Heart left ventricle (tissue), 16 donors: ENCODE measurements at regions of chr1 and their contacts with region 1.

Region 1: GRCh38 chr1:232630047-232630893 is at the start of gene SIPA1L2:
- DNase-seq: peak; percentile 96 to 98 (median 96)
- ATAC-seq: peak; percentile 92 to 98 (median 96)
- H3K4me3 ChIP-seq: peak within 1 kb of the TSS; percentile 68 to 96 (median 90)
- H3K27ac ChIP-seq: peak within 1 kb of the TSS; percentile 78 to 98 (median 94)
- H3K4me1 ChIP-seq: peaks cover 0 to 50% (median 25%) of the 10 kb centered on the region in 12 donors
- H3K27me3 ChIP-seq: no peaks in the 10 kb centered on the region
- CTCF ChIP-seq: peak in 10 of 12 donors; percentile 30 to 65 (median 52)
- POLR2A ChIP-seq: peak in 1 of 2 donors; percentile 94
- total RNA-seq, gene SIPA1L2: 70.8 to 148 (median 102) TPM

Region 2: DNA sequence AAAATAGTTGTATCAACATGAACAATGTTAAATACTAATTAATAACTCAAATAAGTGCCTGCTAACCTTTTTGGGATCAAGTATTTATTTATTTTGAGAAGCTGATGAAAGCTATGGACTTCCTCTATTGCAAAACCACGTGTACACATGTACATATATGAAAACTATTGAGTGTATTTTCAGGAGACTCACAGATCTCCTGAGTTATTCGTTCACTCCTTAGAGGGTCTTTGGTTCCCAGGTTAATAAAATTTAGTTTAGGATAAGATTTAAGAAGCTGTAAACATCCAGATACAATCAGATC is 873.2 kb before region 1 on chr1:
- intact Hi-C with region 1: loop called in 4 of 10 experiments (anchors 5 to 10 kb)
- DNase-seq: no peak
- ATAC-seq: peak in 2 of 4 donors; percentile 18 to 34
- H3K4me3 ChIP-seq: no peak overlapping the region
- H3K27ac ChIP-seq: no peak overlapping the region
- H3K4me1 ChIP-seq: peaks cover 0 to 8% (median 0%) of the 10 kb centered on the region in 12 donors
- H3K27me3 ChIP-seq: no peaks in the 10 kb centered on the region
- CTCF ChIP-seq: peak in 1 of 12 donors; percentile 11
- POLR2A ChIP-seq: no peak

Region 3: DNA sequence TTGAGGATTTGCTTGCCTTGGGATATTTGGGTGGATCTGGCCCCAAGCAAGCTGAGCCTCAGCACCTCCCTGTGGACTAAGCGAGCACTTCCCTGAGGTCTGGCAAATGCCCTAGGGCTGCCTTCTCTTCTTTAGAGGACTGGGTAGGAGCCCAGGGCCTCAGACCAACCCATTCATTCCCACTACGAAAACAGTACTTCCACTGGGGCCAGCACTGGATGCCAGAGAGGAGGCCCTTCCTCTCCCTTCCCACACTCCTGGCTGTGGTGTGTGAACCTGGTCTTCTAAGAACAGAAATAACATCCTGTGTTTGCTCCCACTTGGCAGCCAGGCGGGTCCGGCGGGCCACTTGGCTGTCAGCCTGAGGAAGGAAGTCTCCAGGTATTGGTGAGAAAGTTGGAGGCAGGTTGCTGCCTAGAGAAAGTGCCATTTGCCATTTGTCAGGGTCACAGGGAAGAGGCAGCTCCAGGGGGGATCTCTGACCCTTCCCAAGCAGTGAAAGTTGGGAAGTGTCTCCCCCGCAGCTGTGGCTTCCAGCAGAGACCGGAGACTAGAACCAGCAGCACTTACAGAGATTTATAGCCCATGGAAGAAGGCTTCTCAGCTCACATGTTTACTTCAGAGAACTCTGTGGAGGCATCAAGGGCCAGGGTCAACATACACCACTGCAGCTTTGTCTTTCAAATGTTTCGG is 323.9 kb before region 1 on chr1:
- intact Hi-C with region 1: loop called in 5 of 10 experiments (anchors 5 to 10 kb)
- DNase-seq: peak; percentile 46 to 71 (median 67)
- ATAC-seq: peak; percentile 67 to 96 (median 82)
- H3K4me3 ChIP-seq: no peak overlapping the region
- H3K27ac ChIP-seq: peak overlapping the region in 9 of 12 donors; percentile 2 to 71 (median 44)
- H3K4me1 ChIP-seq: peaks cover 0 to 27% (median 14%) of the 10 kb centered on the region in 12 donors
- H3K27me3 ChIP-seq: no peaks in the 10 kb centered on the region
- CTCF ChIP-seq: peak; percentile 10 to 66 (median 46)
- POLR2A ChIP-seq: no peak

Region 4: GRCh38 chr1:232435729-232436128 is 194.5 kb before region 1 on chr1:
- intact Hi-C with region 1: loop called in 4 of 10 experiments (anchors 5 to 10 kb)
- DNase-seq: peak in 2 of 5 donors; percentile 54
- ATAC-seq: peak; percentile 15 to 47 (median 27)
- H3K4me3 ChIP-seq: no peak overlapping the region
- H3K27ac ChIP-seq: peak overlapping the region in 5 of 12 donors; percentile 1 to 18 (median 7)
- H3K4me1 ChIP-seq: peaks cover 3 to 46% (median 17%) of the 10 kb centered on the region in 12 donors
- H3K27me3 ChIP-seq: no peaks in the 10 kb centered on the region
- CTCF ChIP-seq: no peak
- POLR2A ChIP-seq: no peak

Region 5: DNA sequence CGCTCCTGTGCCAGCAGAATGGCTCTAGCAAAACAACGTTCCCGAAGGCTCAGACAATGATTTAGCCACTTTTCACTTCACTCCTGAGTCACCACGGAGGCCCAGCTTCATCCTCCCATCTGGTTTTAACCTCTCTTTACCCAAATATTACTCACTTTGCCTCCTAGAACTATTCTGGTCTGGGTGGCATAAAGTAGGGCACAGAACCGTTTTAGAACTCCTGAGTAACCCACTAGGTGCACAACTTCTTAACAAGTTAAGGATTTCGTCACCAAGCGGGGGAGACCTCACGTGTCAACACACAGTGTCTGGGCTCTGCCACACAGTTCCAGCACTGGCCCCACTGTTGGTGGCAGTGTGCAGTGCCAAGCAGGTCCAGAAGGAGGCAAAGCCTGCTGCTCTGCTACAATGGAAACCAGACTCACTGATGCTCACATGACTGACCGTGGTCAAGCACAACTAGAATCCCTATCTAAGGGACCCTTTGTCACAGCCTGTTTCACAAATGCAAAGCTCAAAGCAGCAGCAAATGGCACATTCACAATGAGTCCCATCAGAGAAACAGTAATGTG is 122.1 kb before region 1 on chr1:
- intact Hi-C with region 1: loop called in 6 of 10 experiments (anchors 5 to 10 kb)
- DNase-seq: peak in 1 of 5 donors; percentile 33
- ATAC-seq: peak in 3 of 4 donors; percentile 40 to 67 (median 65)
- H3K4me3 ChIP-seq: no peak overlapping the region
- H3K27ac ChIP-seq: peak overlapping the region in 1 of 12 donors; percentile 46
- H3K4me1 ChIP-seq: peaks cover 0 to 57% (median 30%) of the 10 kb centered on the region in 12 donors
- H3K27me3 ChIP-seq: no peaks in the 10 kb centered on the region
- CTCF ChIP-seq: peak in 6 of 12 donors; percentile 13 to 38 (median 30)
- POLR2A ChIP-seq: no peak

Region 6: DNA sequence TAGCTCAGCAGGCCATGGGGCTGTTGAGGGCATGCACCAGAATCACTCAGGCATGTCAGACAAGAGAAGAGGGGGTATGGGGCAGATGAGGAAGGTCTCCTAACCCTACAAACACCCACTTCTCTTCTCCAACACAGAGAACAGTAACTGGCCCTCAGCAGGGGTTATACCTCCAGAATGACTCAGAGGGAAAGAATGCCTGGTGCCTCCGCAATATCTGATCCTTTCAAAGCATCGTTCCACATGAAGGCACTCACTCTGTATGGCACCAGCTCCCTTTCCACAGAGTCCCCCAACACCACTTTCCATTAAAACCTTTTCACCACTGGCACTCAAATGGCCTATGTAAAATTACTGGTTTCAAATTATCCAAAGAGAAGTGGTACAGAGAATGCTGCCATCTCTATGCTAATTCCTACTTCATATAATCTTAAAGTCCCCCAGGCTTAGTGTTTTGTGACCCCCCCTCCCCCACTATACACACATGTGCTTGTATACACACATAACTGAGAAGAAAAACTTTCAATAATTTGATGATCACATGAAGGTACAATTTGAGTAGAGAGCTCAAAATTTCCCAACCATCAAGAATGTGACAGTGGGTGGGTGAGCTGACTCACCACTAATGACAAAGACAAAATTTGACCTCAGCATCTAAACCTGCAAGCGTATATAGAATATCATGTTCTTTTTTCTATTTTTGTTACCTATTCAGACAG is 91.9 kb before region 1 on chr1:
- intact Hi-C with region 1: no loop called
- DNase-seq: no peak
- ATAC-seq: peak in 3 of 4 donors; percentile 35 to 54 (median 37)
- H3K4me3 ChIP-seq: no peak overlapping the region
- H3K27ac ChIP-seq: no peak overlapping the region
- H3K4me1 ChIP-seq: peaks cover 0 to 61% (median 25%) of the 10 kb centered on the region in 12 donors
- H3K27me3 ChIP-seq: no peaks in the 10 kb centered on the region
- CTCF ChIP-seq: no peak
- POLR2A ChIP-seq: no peak

Region 7: GRCh38 chr1:232578651-232579195 is 51.5 kb before region 1 on chr1:
- intact Hi-C with region 1: loop called in 3 of 10 experiments (anchors 5 to 10 kb)
- DNase-seq: no peak
- ATAC-seq: peak in 3 of 4 donors; percentile 36 to 85 (median 40)
- H3K4me3 ChIP-seq: no peak overlapping the region
- H3K27ac ChIP-seq: peak overlapping the region; percentile 15 to 78 (median 54)
- H3K4me1 ChIP-seq: peaks cover 0 to 77% (median 39%) of the 10 kb centered on the region in 12 donors
- H3K27me3 ChIP-seq: no peaks in the 10 kb centered on the region
- CTCF ChIP-seq: no peak
- POLR2A ChIP-seq: no peak

Region 8: GRCh38 chr1:232599178-232600041 is 30.9 kb before region 1 on chr1:
- intact Hi-C with region 1: no loop called
- DNase-seq: no peak
- ATAC-seq: peak in 3 of 4 donors; percentile 14 to 27 (median 19)
- H3K4me3 ChIP-seq: no peak overlapping the region
- H3K27ac ChIP-seq: peak overlapping the region in 7 of 12 donors; percentile 10 to 42 (median 27)
- H3K4me1 ChIP-seq: peaks cover 0 to 62% (median 45%) of the 10 kb centered on the region in 12 donors
- H3K27me3 ChIP-seq: no peaks in the 10 kb centered on the region
- CTCF ChIP-seq: no peak
- POLR2A ChIP-seq: no peak

Region 9: GRCh38 chr1:232655028-232655747 is 24.9 kb after region 1 on chr1:
- intact Hi-C with region 1: no loop called
- DNase-seq: no peak
- ATAC-seq: no peak
- H3K4me3 ChIP-seq: no peak overlapping the region
- H3K27ac ChIP-seq: no peak overlapping the region
- H3K4me1 ChIP-seq: peaks cover 0 to 6% (median 0%) of the 10 kb centered on the region in 12 donors
- H3K27me3 ChIP-seq: peaks cover 0 to 4% (median 0%) of the 10 kb centered on the region in 9 donors
- CTCF ChIP-seq: no peak
- POLR2A ChIP-seq: no peak

Region 10: GRCh38 chr1:233172227-233172626 is 542.0 kb after region 1 on chr1:
- intact Hi-C with region 1: loop called in 8 of 10 experiments (anchors 2 to 5 kb)
- DNase-seq: no peak
- ATAC-seq: peak in 3 of 4 donors; percentile 45 to 60 (median 56)
- H3K4me3 ChIP-seq: no peak overlapping the region
- H3K27ac ChIP-seq: no peak overlapping the region
- H3K4me1 ChIP-seq: no peaks in the 10 kb centered on the region
- H3K27me3 ChIP-seq: no peaks in the 10 kb centered on the region
- CTCF ChIP-seq: peak; percentile 24 to 64 (median 50)
- POLR2A ChIP-seq: no peak